ENCODE measurements at regions of chr12 and their contacts with region 1.

Region 1: DNA sequence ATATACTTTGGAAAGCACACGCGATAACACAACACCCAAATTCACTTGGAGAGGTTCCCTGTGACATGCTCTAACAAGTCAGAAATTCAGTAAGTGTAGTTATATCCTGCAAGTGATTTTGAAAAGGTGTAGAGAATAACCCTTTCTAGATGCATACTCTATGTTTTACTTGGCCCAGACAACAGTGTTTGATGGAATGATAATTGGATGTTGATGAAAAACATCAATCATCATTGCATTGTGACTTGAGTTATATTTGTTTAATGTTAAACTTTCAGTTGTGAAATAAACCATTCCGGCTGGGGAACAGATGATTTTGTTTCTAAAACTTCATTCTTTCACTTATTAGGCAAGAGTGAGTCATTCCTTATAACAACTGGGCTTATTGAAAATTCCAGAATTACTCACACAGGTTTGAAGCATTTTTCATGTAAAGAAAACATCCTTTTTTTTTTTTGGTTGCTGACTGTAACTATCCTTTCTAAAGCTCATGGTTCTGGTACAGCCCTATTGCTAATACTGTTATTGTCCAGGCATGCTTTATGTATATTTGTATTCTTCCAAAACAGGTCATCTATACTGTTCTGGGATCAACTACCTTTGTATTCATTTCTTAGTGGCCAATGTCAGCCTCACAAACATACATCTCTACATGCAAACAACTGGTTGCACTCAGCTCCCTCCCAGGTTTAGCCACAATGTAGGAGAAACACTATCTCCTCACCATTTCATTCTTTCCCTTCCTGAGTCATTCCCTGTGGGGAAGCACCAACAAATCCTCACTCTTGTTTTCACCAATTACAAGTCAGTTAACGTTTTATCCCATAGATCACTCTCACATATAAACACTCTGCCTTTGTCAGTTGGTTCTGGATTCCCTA is 121.2 kb upstream of the LRIG3 start:
- DNase-seq: peak; percentile 94
- H3K4me3 Mint-ChIP-seq: peak overlapping the region; percentile 62
- H3K27ac Mint-ChIP-seq: peak overlapping the region; percentile 64
- H3K4me1 Mint-ChIP-seq: peaks cover 45% of the 10 kb centered on the region
- H3K27me3 Mint-ChIP-seq: no peaks in the 10 kb centered on the region
- CTCF ChIP-seq: no peak

Region 2: GRCh38 chr12:58907391-58907790 is 134.1 kb before region 1 on chr12:
- CTCF ChIA-PET with region 1: interaction called, 5 read pairs
- POLR2A ChIA-PET with region 1: interaction called, 655 read pairs
- intact Hi-C with region 1: no loop called
- DNase-seq: no peak
- H3K4me3 Mint-ChIP-seq: no peak overlapping the region
- H3K27ac Mint-ChIP-seq: peak overlapping the region; percentile 99
- H3K4me1 Mint-ChIP-seq: peaks cover 39% of the 10 kb centered on the region
- H3K27me3 Mint-ChIP-seq: no peaks in the 10 kb centered on the region
- CTCF ChIP-seq: no peak

Region 3: GRCh38 chr12:59067083-59067482 is 25.6 kb after region 1 on chr12:
- CTCF ChIA-PET with region 1: interaction called, 5 read pairs
- POLR2A ChIA-PET with region 1: interaction called, 389 read pairs
- intact Hi-C with region 1: no loop called
- DNase-seq: no peak
- H3K4me3 Mint-ChIP-seq: no peak overlapping the region
- H3K27ac Mint-ChIP-seq: peak overlapping the region; percentile 9
- H3K4me1 Mint-ChIP-seq: peaks cover 44% of the 10 kb centered on the region
- H3K27me3 Mint-ChIP-seq: no peaks in the 10 kb centered on the region
- CTCF ChIP-seq: no peak

Region 4: DNA sequence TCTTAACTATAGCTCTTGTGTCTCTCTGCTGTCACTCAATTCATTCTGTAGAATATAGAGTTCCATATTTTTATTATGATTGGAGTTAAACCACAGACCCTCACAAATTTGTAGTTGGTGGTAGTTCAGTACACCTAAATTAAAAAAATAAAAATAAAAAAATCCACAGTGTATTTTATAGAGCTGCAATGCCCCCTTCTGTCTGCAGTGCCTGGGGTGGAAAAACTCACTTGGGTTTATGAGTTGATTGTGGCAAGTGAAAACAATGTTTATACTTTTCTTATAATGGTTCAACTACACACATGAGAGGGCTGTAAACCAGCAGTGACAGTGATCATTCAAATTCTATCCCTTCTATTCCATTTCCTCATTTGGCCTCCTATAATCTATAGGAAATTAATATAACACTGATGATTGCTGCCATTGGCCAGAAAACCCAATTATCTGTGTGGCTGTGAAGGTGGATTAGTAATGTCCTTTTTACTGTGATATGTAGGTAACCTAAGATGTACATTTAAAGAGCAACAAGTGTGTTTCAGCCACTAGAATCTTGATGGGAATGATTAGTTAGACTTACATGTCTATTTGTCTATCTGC is 45.7 kb after region 1 on chr12:
- CTCF ChIA-PET with region 1: interaction called, 5 read pairs
- POLR2A ChIA-PET with region 1: interaction called, 389 read pairs
- intact Hi-C with region 1: no loop called
- DNase-seq: peak; percentile 37
- H3K4me3 Mint-ChIP-seq: no peak overlapping the region
- H3K27ac Mint-ChIP-seq: no peak overlapping the region
- H3K4me1 Mint-ChIP-seq: peaks cover 33% of the 10 kb centered on the region
- H3K27me3 Mint-ChIP-seq: no peaks in the 10 kb centered on the region
- CTCF ChIP-seq: peak; percentile 79